Mammary epithelial cell (primary cell): ENCODE measurements at regions of chr5 and their contacts with region 1.

Region 1: DNA sequence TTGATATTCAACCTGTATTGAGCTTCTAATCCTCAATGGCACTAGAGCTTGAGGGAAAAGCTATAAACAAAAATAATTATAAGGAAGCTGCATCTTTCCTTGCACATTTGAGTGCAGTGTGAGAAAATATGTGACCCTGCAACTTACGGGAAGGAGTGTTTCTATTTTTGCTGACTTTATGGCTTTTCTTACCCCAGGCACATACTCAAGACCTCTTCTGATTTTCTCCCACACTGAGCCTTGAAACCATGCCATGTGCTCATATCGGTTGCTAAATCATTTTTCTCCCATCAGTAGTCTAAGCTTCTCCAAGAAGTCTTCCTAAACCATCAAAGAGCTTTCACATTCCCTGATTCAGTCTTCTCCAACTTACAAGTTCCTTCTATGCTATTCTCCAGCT is 91.5 kb downstream of the CDH6 start:
- DNase-seq: no peak
- H3K4me3 ChIP-seq: no peak overlapping the region
- H3K27ac ChIP-seq: no peak overlapping the region
- H3K4me1 ChIP-seq: peaks cover 3% of the 10 kb centered on the region
- H3K27me3 ChIP-seq: no peaks in the 10 kb centered on the region
- CTCF ChIP-seq: no peak

Region 2: GRCh38 chr5:30866142-30866541 is 418.9 kb before region 1 on chr5:
- CTCF ChIA-PET with region 1: no interaction called
- dilution Hi-C with region 1: no loop called
- in situ Hi-C with region 1: no loop called
- intact Hi-C with region 1: no loop called
- DNase-seq: no peak
- H3K4me3 ChIP-seq: no peak overlapping the region
- H3K27ac ChIP-seq: no peak overlapping the region
- H3K4me1 ChIP-seq: no peaks in the 10 kb centered on the region
- H3K27me3 ChIP-seq: no peaks in the 10 kb centered on the region
- CTCF ChIP-seq: no peak

Region 3: GRCh38 chr5:31244921-31245320 is 40.1 kb before region 1 on chr5:
- CTCF ChIA-PET with region 1: no interaction called
- dilution Hi-C with region 1: loop called (anchors 5 kb)
- in situ Hi-C with region 1: no loop called
- intact Hi-C with region 1: no loop called
- DNase-seq: no peak
- H3K4me3 ChIP-seq: no peak overlapping the region
- H3K27ac ChIP-seq: no peak overlapping the region
- H3K4me1 ChIP-seq: no peaks in the 10 kb centered on the region
- H3K27me3 ChIP-seq: no peaks in the 10 kb centered on the region
- CTCF ChIP-seq: no peak

Region 4: DNA sequence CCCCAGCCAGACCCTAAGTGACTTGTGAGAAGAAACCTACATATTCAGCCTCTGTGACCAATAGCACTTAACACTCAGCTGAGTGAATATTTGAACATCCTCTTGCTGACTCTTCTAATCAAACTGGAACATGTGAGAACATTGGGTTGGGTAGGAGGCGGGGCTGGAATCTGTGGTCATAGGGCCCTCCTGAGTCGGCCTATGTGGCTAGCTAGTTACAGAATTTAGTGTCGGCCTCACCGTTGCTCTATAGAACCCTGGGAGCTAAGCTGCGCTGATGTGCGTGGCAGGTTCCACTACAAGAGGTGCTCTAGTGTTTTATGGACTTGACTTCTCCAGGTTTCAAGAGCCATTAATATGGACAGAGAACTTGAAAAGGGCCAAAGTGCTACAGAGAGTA is 108.1 kb after region 1 on chr5:
- CTCF ChIA-PET with region 1: no interaction called
- dilution Hi-C with region 1: loop called (anchors 5 kb)
- in situ Hi-C with region 1: no loop called
- intact Hi-C with region 1: no loop called
- DNase-seq: no peak
- H3K4me3 ChIP-seq: no peak overlapping the region
- H3K27ac ChIP-seq: no peak overlapping the region
- H3K4me1 ChIP-seq: no peaks in the 10 kb centered on the region
- H3K27me3 ChIP-seq: no peaks in the 10 kb centered on the region
- CTCF ChIP-seq: no peak